ENCODE measurements at regions of chr12 and their contacts with region 1.

Region 1: GRCh38 chr12:101599771-101600484 is 5.2 kb downstream of the MYBPC1 start:
- DNase-seq: peak; percentile 90
- ATAC-seq: peak; percentile 86
- H3K4me3 ChIP-seq: peak overlapping the region; percentile 4 to 43 (median 42); a peak in 5 of 6 replicates
- H3K27ac ChIP-seq: peak overlapping the region; percentile 91
- H3K4me1 ChIP-seq: peaks cover 71% of the 10 kb centered on the region
- H3K27me3 ChIP-seq: no peaks in the 10 kb centered on the region
- CTCF ChIP-seq: no peak
- EP300 ChIP-seq: peak in 1 of 2 experiments; percentile 83; a peak in 2 of 4 replicates
- POLR2A ChIP-seq: peak in 1 of 2 experiments; percentile 51; a peak in 1 of 4 replicates
- RAD21 ChIP-seq: no peak

Region 2: GRCh38 chr12:101536069-101536674 is 63.8 kb before region 1 on chr12:
- CTCF ChIA-PET with region 1: no interaction called
- POLR2A ChIA-PET with region 1: no interaction called
- in situ Hi-C with region 1: no loop called
- intact Hi-C with region 1: no loop called
- DNase-seq: no peak
- ATAC-seq: no peak
- H3K4me3 ChIP-seq: no peak overlapping the region
- H3K27ac ChIP-seq: no peak overlapping the region
- H3K4me1 ChIP-seq: no peaks in the 10 kb centered on the region
- H3K27me3 ChIP-seq: peaks cover 0 to 8% of the 10 kb centered on the region in 2 experiments; a peak in 3 of 5 replicates
- CTCF ChIP-seq: no peak
- EP300 ChIP-seq: no peak
- POLR2A ChIP-seq: no peak
- RAD21 ChIP-seq: no peak

Region 3: DNA sequence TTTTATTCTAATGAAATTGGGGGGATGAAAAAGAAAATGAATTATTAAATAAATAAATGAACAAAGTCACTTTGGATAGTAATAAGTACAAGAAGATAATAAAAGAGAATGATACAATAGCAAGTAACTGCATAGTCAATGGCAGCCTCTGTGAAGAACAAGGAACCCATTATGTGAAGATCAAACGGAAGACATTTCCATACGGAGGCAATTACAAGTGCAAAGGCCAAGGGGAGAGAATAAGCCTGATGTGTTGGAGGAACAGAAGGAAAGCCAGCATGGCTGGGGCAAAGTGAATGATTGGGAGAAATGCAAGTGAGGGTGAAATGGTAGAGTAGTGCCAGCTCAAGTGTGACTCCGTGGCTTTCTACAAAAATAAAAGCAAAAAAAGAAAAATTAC is 53.6 kb after region 1 on chr12:
- CTCF ChIA-PET with region 1: no interaction called
- POLR2A ChIA-PET with region 1: interaction called, 10 read pairs
- in situ Hi-C with region 1: no loop called
- intact Hi-C with region 1: no loop called
- DNase-seq: peak; percentile 97
- ATAC-seq: peak; percentile 100
- H3K4me3 ChIP-seq: no peak overlapping the region
- H3K27ac ChIP-seq: peak overlapping the region; percentile 84
- H3K4me1 ChIP-seq: peaks cover 53% of the 10 kb centered on the region
- H3K27me3 ChIP-seq: no peaks in the 10 kb centered on the region
- CTCF ChIP-seq: no peak
- EP300 ChIP-seq: peak; percentile 22 to 83; a peak in 2 of 4 replicates
- POLR2A ChIP-seq: no peak
- RAD21 ChIP-seq: 0 out of 2 replicates have a peak, but pooled peaks have one; percentile 10